Dorsolateral prefrontal cortex (tissue), 120 donors: ENCODE measurements at regions of chr5 and their contacts with region 1.

Region 1: DNA sequence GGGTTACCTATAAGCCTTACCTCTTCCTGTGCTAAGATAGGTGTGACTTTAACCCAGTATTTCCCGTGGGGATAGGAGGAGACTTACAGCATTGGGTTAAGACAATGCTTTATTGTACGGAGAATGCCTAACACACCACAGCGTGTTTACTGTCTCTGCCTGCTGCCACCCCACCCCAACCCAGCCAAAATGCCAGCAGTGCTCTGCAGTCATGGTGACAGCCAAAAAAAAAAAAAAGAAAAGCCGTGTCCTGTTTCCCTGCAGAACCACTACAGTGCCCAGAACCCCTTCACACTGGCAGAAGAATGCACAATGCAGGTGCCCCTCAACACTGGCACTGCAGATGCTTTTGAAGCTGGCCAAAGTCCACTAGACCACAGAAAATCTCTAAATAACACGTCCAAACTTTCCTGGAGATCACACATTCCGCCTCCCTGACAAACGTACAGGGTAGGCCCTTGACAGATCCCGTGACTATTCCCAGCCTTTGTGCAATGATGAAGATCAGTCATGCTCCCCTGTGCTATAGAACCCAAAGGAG is 102.2 kb downstream of the SERINC5 start:
- DNase-seq: peak in 5 of 10 donors; percentile 44 to 56 (median 51)
- H3K4me3 ChIP-seq: peak overlapping the region in 4 of 59 donors; percentile 1 to 30 (median 10)
- H3K27ac ChIP-seq: peak overlapping the region in 58 of 59 donors; percentile 16 to 92 (median 80)
- H3K27me3 ChIP-seq: no peaks in the 10 kb centered on the region
- CTCF ChIP-seq: no peak

Region 2: DNA sequence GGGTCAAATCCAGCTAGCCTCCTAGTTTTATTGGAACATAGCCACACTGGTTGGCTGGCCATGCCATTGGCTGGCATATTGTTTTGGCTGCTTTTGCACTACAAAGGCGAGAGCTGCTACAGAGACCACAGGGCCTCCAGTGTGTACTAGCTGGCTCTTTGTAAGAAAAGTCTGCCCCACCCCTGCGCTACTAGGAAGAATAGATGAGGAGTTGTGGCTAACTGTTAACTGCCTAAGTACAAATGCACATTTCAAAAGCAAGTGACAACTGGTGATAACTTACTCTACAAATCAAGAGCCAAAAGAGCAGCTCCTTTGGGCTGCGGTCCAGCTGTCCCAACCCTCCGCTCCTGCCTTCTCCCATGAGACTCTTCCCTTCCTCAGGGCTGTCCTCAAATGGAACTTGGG is 38.3 kb after region 1 on chr5:
- intact Hi-C with region 1: loop called in 1 of 2 experiments (anchors 2 kb)
- DNase-seq: peak in 6 of 10 donors; percentile 50 to 74 (median 64)
- H3K4me3 ChIP-seq: peak overlapping the region in 28 of 59 donors; percentile 0 to 41 (median 10)
- H3K27ac ChIP-seq: peak overlapping the region; percentile 51 to 97 (median 87)
- H3K27me3 ChIP-seq: no peaks in the 10 kb centered on the region
- CTCF ChIP-seq: no peak

Region 3: GRCh38 chr5:80204808-80205614 is 51.4 kb after region 1 on chr5:
- intact Hi-C with region 1: loop called in 1 of 2 experiments (anchors 10 kb)
- DNase-seq: no peak
- H3K4me3 ChIP-seq: peak overlapping the region in 7 of 59 donors; percentile 0 to 40 (median 10)
- H3K27ac ChIP-seq: peak overlapping the region; percentile 19 to 98 (median 91)
- H3K27me3 ChIP-seq: no peaks in the 10 kb centered on the region
- CTCF ChIP-seq: peak in 2 of 56 donors; percentile 13 to 21